Mammary epithelial cell (primary cell): ENCODE measurements at regions of chr12 and their contacts with region 1.

Region 1: DNA sequence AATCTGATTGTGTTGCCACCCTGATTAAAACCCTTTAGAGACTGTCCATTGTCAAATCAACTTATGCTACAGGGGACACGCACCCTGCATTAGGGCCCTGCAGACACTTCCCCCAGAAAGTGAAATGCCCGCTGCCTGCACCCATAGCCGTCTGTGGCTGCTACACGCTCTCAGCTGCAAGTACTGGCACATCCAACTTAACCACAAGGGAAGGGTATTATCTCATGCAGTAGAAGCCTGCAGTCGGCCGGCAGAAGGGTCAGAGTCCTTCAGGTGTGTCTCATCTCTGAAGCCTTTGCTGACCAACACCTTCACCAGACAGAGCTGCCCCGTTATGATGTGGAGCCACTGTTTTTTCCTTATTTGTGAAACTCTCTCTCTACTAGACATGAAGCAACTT is 20.8 kb downstream of the CFAP251 start:
- DNase-seq: peak; percentile 90
- H3K4me3 ChIP-seq: peak overlapping the region in 1 of 3 experiments; percentile 11
- H3K27ac ChIP-seq: peak overlapping the region; percentile 68
- H3K4me1 ChIP-seq: peaks cover 31% of the 10 kb centered on the region
- H3K27me3 ChIP-seq: no peaks in the 10 kb centered on the region
- CTCF ChIP-seq: no peak

Region 2: DNA sequence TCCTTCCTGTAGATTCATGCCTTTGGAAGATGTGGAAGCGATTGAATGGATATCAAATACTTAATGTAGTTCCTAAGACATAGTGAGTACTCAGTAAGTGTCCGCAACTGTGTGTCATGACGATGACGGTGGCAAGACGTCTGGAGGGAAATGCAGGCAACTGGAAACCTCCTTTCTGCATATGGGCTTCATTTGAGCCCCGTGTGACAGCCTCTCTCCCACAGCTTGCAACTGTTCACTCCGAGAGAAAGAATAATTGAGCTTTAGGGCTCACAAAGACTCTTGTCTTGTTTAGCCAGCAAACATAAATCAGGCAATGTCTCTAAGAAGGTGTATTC is 13.9 kb before region 1 on chr12:
- CTCF ChIA-PET with region 1: no interaction called
- dilution Hi-C with region 1: no loop called
- in situ Hi-C with region 1: no loop called
- intact Hi-C with region 1: loop called (anchors 1 kb)
- DNase-seq: no peak
- H3K4me3 ChIP-seq: no peak overlapping the region
- H3K27ac ChIP-seq: peak overlapping the region; percentile 59
- H3K4me1 ChIP-seq: peaks cover 22% of the 10 kb centered on the region
- H3K27me3 ChIP-seq: no peaks in the 10 kb centered on the region
- CTCF ChIP-seq: no peak